Mammary epithelial cell (primary cell): ENCODE measurements at regions of chr21 and their contacts with region 1.

Region 1: GRCh38 chr21:36491209-36491910 is 11.4 kb upstream of the CLDN14 start:
- DNase-seq: no peak
- H3K4me3 ChIP-seq: no peak overlapping the region
- H3K27ac ChIP-seq: no peak overlapping the region
- H3K4me1 ChIP-seq: no peaks in the 10 kb centered on the region
- H3K27me3 ChIP-seq: no peaks in the 10 kb centered on the region
- CTCF ChIP-seq: no peak

Region 2: GRCh38 chr21:36411301-36411700 is 80.1 kb before region 1 on chr21:
- CTCF ChIA-PET with region 1: no interaction called
- dilution Hi-C with region 1: loop called (anchors 5 kb)
- in situ Hi-C with region 1: no loop called
- intact Hi-C with region 1: no loop called
- DNase-seq: no peak
- H3K4me3 ChIP-seq: no peak overlapping the region
- H3K27ac ChIP-seq: no peak overlapping the region
- H3K4me1 ChIP-seq: no peaks in the 10 kb centered on the region
- H3K27me3 ChIP-seq: no peaks in the 10 kb centered on the region
- CTCF ChIP-seq: no peak

Region 3: GRCh38 chr21:36545776-36546511 is 54.6 kb after region 1 on chr21:
- CTCF ChIA-PET with region 1: no interaction called
- dilution Hi-C with region 1: loop called (anchors 5 kb)
- in situ Hi-C with region 1: no loop called
- intact Hi-C with region 1: no loop called
- DNase-seq: no peak
- H3K4me3 ChIP-seq: no peak overlapping the region
- H3K27ac ChIP-seq: no peak overlapping the region
- H3K4me1 ChIP-seq: no peaks in the 10 kb centered on the region
- H3K27me3 ChIP-seq: peaks cover 19% of the 10 kb centered on the region
- CTCF ChIP-seq: no peak